ENCODE measurements at regions of chr10 and their contacts with region 1.

Region 1: GRCh38 chr10:11472158-11472753 is 139.2 kb downstream of the USP6NL start:
- DNase-seq: peak; percentile 44
- ATAC-seq: peak; percentile 97
- H3K4me3 ChIP-seq: no peak overlapping the region
- H3K27ac ChIP-seq: no peak overlapping the region
- H3K4me1 ChIP-seq: no peaks in the 10 kb centered on the region
- H3K27me3 ChIP-seq: no peaks in the 10 kb centered on the region
- CTCF ChIP-seq: peak; percentile 85
- EP300 ChIP-seq: no peak
- POLR2A ChIP-seq: no peak
- RAD21 ChIP-seq: peak; percentile 65

Region 2: DNA sequence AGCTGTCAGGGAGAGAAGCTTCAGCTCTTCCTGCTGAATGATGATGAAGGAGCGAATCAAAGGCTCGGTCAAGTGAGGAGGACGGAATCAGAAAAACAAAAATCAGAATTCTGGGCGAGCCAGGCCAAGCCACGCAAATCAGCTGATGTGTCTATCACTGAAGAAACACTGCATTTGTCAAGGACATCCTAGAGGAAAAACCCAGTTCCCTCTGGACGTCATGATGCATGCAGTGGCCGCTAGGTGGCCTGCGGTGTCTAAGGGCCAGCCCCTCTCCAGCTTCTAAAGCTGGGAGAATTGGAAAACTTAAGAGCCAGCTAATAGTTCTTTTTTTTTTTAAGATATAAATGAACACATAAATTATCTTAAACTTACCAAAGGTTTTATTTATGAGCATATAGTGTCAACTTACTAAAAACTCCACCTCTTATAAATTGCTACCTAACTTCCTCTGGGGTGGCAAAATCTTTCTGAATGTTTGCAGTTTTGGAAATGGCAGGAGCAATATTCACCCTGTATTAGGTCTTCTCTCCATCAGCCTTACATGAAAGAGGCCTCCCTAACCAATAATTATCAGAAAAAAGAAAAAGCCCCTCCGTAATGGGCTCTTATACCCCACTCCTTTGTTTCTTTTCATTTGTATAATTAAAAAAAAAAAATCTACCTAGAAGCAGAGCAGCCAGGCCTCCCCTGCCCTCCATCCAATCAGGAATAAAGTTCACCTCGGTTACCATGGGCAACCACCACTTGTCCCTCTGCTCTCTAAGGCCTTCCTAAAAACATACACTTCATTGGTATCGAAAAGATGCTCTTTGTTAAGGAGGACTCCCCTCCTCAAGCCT is 47.6 kb before region 1 on chr10:
- CTCF ChIA-PET with region 1: interaction called, 7 read pairs
- POLR2A ChIA-PET with region 1: no interaction called
- in situ Hi-C with region 1: no loop called
- intact Hi-C with region 1: loop called (anchors 1 kb)
- DNase-seq: peak; percentile 39
- ATAC-seq: peak; percentile 97
- H3K4me3 ChIP-seq: no peak overlapping the region
- H3K27ac ChIP-seq: no peak overlapping the region
- H3K4me1 ChIP-seq: no peaks in the 10 kb centered on the region
- H3K27me3 ChIP-seq: peaks cover 0 to 4% of the 10 kb centered on the region in 2 experiments; a peak in 2 of 5 replicates
- CTCF ChIP-seq: peak; percentile 77
- EP300 ChIP-seq: no peak
- POLR2A ChIP-seq: no peak
- RAD21 ChIP-seq: no peak

Region 3: DNA sequence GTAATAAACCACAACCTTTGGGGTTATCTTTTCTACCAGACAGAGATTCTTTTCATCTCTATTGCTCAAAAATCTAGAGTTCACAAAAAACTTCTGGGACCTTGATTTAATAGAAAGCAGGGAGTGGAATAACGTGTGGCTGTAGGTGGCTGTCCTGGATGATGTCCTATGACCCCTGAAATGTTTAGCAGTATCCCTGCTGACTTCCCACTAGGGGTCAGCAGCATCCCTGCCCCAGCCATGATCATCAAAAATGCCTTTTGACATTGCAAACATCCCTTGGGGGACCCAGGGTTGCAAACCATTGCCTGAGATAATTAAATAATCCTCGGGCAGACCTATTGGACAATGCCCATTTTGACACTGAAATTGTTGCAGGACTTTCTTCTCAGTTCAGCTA is 37.9 kb before region 1 on chr10:
- CTCF ChIA-PET with region 1: interaction called, 4 read pairs
- POLR2A ChIA-PET with region 1: no interaction called
- in situ Hi-C with region 1: no loop called
- intact Hi-C with region 1: loop called (anchors 1 kb)
- DNase-seq: peak; percentile 16
- ATAC-seq: peak; percentile 77
- H3K4me3 ChIP-seq: no peak overlapping the region
- H3K27ac ChIP-seq: no peak overlapping the region
- H3K4me1 ChIP-seq: no peaks in the 10 kb centered on the region
- H3K27me3 ChIP-seq: peaks cover 4 to 40% of the 10 kb centered on the region in 2 experiments; a peak in 3 of 5 replicates
- CTCF ChIP-seq: peak; percentile 64
- EP300 ChIP-seq: no peak
- POLR2A ChIP-seq: no peak
- RAD21 ChIP-seq: peak; percentile 12; the same call in 1 of the 2 replicates

Region 4: DNA sequence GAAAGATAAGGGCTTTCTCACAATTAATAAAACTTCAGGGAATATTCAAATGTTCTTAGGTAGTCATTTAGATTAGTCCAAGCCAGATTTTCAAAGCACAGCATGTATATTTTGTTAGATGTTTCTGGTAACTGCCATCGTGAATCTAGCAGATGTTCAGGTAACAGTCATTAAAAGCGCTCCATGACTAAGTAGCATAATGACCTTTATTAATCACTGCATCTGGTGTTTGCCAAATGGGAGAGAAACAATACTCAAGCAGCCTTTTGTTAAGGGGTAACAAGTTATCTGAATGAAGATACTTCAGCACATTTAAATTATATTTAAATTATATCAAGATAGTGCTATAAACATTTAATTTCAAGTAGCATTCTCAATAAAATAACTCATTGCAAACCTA is 91.7 kb after region 1 on chr10:
- CTCF ChIA-PET with region 1: no interaction called
- POLR2A ChIA-PET with region 1: no interaction called
- in situ Hi-C with region 1: no loop called
- intact Hi-C with region 1: no loop called
- DNase-seq: no peak
- ATAC-seq: no peak
- H3K4me3 ChIP-seq: no peak overlapping the region
- H3K27ac ChIP-seq: no peak overlapping the region
- H3K4me1 ChIP-seq: peaks cover 44% of the 10 kb centered on the region
- H3K27me3 ChIP-seq: no peaks in the 10 kb centered on the region
- CTCF ChIP-seq: no peak
- EP300 ChIP-seq: no peak
- POLR2A ChIP-seq: no peak
- RAD21 ChIP-seq: no peak

Measured in HepG2 (cell line).